ENCODE measurements at regions of chr17 and their contacts with region 1.

Region 1: DNA sequence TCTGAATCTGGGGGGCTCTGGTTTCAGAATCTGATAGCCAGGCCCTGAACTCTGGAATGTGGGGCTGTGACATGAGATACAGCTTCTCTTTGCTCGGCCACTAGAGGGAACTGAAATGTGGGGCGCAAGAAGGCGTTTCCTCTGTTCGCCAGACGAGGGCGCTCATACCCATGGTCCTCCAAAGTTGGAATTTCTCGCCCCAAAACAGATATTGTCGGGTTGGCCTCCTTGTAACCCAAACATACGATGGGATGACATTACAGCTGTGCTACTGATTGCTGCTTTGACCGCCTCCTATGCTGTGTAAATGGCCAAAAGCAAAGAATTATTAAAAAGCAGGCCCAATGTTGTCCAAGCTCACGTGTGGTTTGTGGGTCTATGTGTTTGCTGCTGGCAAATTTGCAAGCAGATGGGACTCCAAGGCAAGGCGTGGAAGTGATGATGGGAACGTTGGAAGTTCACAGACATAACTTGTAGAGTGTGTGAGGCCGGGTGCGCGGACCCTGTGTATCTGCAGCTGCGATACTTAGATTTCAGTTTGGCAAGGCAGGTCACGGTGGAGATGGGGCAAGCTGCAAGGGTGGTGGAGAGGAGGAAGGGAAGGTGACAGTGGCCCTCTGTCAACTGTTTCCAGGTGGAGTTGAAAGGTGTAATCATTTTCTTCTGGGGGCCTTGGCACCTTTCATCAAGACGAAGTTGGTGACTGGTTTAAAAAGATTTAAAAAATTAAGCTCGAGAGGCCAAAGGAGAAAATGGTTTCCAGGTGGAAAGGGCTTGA is 13.0 kb upstream of the MSI2 start:
- DNase-seq: peak; percentile 63 to 89 (median 70)
- ATAC-seq: peak; percentile 98
- H3K4me3 ChIP-seq: no peak overlapping the region
- H3K4me3 Mint-ChIP-seq: no peak overlapping the region
- H3K27ac ChIP-seq: no peak overlapping the region
- H3K27ac Mint-ChIP-seq: no peak overlapping the region
- H3K4me1 ChIP-seq: peaks cover 4% of the 10 kb centered on the region
- H3K4me1 Mint-ChIP-seq: no peaks in the 10 kb centered on the region
- H3K27me3 ChIP-seq: no peaks in the 10 kb centered on the region
- H3K27me3 Mint-ChIP-seq: peaks cover 4% of the 10 kb centered on the region
- CTCF ChIP-seq: peak; percentile 99

Region 2: DNA sequence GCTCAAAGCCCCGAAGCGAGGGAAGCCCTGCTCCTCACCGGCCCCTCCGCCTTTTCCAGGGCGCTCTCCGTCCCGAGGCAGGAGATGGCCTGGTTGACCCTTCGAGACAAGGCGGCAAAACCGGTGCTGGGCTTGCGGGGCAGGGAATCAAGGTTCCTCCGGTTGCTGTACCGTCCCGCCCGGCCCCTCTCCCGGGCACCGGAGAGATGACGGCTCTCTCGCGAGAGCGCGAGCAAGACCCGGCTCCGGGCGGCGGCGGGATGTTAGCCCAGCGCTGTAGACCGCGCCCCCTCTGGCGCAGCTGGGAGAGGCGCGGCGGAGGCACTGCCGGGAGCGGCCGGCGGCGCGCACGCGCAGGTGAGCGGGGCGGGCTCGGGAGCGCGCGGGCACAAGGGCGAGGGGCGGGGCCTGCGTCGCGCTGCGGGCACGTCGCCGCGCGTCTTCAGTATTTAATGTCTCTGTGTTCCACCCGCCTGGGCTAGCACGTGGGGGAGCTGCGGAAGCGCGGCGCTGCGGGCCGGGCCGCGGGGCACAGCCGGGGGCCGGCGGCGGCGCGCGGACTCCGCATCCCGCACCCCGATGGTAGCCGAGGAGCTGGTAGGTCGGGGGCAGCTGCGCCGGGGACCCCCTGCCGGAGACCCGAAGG is 158.4 kb before region 1 on chr17 and contains the start of gene AKAP1:
- CTCF ChIA-PET with region 1: no interaction called
- POLR2A ChIA-PET with region 1: no interaction called
- intact Hi-C with region 1: no loop called
- DNase-seq: peak; percentile 87 to 99 (median 94)
- ATAC-seq: peak; percentile 88
- H3K4me3 ChIP-seq: peak within 1 kb of the TSS; percentile 89
- H3K4me3 Mint-ChIP-seq: peak within 1 kb of the TSS; percentile 95
- H3K27ac ChIP-seq: peak within 1 kb of the TSS; percentile 84 to 85
- H3K27ac Mint-ChIP-seq: peak within 1 kb of the TSS; percentile 89
- H3K4me1 ChIP-seq: peaks cover 20% of the 10 kb centered on the region
- H3K4me1 Mint-ChIP-seq: peaks cover 36% of the 10 kb centered on the region
- H3K27me3 ChIP-seq: no peaks in the 10 kb centered on the region
- H3K27me3 Mint-ChIP-seq: no peaks in the 10 kb centered on the region
- CTCF ChIP-seq: no peak
- total RNA-seq, gene AKAP1: 20.3 to 23.1 TPM

Region 3: DNA sequence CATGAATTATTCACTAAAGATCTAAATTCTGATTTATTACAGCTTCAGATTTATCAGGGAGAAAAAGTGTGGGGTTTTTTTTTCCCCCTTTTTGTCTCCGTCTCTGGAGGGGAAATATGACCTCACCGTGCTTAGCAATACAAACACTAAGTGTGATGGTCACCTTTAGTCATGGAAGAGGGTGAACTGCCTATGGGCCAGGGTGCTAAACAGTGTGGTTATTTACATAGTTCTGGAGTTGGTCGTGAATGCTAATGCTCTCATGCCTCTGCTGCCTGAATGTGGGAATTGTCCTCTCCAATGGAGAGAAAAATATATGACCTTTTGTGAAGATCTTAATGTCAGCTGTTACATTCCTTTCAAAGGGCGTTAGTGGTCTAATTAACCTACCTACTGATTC is 31.8 kb before region 1 on chr17:
- CTCF ChIA-PET with region 1: no interaction called
- POLR2A ChIA-PET with region 1: no interaction called
- intact Hi-C with region 1: no loop called
- DNase-seq: no peak
- ATAC-seq: no peak
- H3K4me3 ChIP-seq: no peak overlapping the region
- H3K4me3 Mint-ChIP-seq: no peak overlapping the region
- H3K27ac ChIP-seq: no peak overlapping the region
- H3K27ac Mint-ChIP-seq: no peak overlapping the region
- H3K4me1 ChIP-seq: no peaks in the 10 kb centered on the region
- H3K4me1 Mint-ChIP-seq: no peaks in the 10 kb centered on the region
- H3K27me3 ChIP-seq: peaks cover 0 to 3% of the 10 kb centered on the region in 2 experiments
- H3K27me3 Mint-ChIP-seq: peaks cover 6% of the 10 kb centered on the region
- CTCF ChIP-seq: no peak

Region 4: GRCh38 chr17:57261084-57261461 is 17.7 kb after region 1 on chr17:
- CTCF ChIA-PET with region 1: interaction called, 79 read pairs
- POLR2A ChIA-PET with region 1: interaction called, 8 read pairs
- intact Hi-C with region 1: loop called in 1 of 2 experiments (anchors 1 kb)
- DNase-seq: no peak
- ATAC-seq: no peak
- H3K4me3 ChIP-seq: no peak overlapping the region
- H3K4me3 Mint-ChIP-seq: peak overlapping the region; percentile 70
- H3K27ac ChIP-seq: no peak overlapping the region
- H3K27ac Mint-ChIP-seq: peak overlapping the region; percentile 26
- H3K4me1 ChIP-seq: peaks cover 33% of the 10 kb centered on the region
- H3K4me1 Mint-ChIP-seq: peaks cover 80% of the 10 kb centered on the region
- H3K27me3 ChIP-seq: no peaks in the 10 kb centered on the region
- H3K27me3 Mint-ChIP-seq: no peaks in the 10 kb centered on the region
- CTCF ChIP-seq: no peak

Region 5: GRCh38 chr17:57284984-57285646 is 41.8 kb after region 1 on chr17:
- CTCF ChIA-PET with region 1: interaction called, 20 read pairs
- POLR2A ChIA-PET with region 1: no interaction called
- intact Hi-C with region 1: loop called (anchors 5 kb)
- DNase-seq: peak in 9 of 14 experiments; percentile 6 to 65 (median 22)
- ATAC-seq: peak; percentile 27
- H3K4me3 ChIP-seq: peak overlapping the region; percentile 17
- H3K4me3 Mint-ChIP-seq: peak overlapping the region; percentile 76
- H3K27ac ChIP-seq: peak overlapping the region in 1 of 2 donors; percentile 4
- H3K27ac Mint-ChIP-seq: peak overlapping the region; percentile 80
- H3K4me1 ChIP-seq: peaks cover 46% of the 10 kb centered on the region
- H3K4me1 Mint-ChIP-seq: peaks cover 80% of the 10 kb centered on the region
- H3K27me3 ChIP-seq: no peaks in the 10 kb centered on the region
- H3K27me3 Mint-ChIP-seq: no peaks in the 10 kb centered on the region
- CTCF ChIP-seq: no peak

Region 6: DNA sequence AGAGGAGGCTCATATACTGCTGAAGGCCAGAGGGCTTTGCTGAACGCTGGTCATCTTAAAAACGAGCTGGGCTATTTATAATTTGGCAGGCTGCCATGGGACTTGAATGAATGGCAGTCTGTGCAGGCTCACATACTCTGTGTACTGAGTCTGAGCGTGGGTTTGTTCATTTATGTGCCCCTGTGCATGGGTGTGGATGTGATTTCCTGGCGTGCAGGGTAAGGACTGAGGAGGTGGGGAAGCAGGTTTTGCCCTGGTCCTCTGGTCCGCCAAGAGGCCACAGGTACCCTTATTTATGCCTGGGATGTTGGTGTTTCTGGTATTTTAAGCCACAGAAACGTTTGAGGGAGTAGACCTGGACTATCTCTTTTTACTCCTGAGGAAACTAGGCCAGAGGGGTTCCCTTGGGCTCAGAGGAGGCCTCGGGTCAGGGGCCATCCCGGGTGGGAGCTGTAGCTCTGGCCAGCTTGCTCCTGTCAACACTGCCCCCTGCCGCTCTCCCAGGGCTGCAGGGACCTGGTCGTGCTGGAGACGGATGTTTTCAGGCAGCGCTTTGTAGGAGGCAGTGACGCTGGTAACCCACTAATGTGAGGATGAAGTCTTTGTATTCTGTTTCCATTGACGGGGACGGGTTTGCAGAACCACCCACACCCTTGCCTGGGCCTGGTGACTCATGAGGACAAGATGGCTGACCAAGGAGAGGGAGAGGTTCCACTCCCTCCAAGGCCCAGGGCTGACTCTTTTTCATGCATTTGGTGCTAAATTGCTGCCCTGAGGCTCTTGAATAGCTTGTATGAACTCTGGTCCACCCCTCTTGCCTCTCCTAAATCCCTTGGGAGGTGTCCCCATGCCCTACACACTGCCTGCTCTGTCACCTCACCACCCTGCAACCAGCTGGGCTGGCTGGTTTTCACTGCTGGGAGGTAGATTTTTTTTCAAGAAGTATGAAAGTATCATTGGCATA is 197.4 kb after region 1 on chr17:
- CTCF ChIA-PET with region 1: interaction called, 20 read pairs
- POLR2A ChIA-PET with region 1: interaction called, 5 read pairs
- intact Hi-C with region 1: loop called (anchors 5 kb)
- DNase-seq: peak; percentile 33 to 78 (median 64)
- ATAC-seq: peak; percentile 78
- H3K4me3 ChIP-seq: no peak overlapping the region
- H3K4me3 Mint-ChIP-seq: peak overlapping the region; percentile 30
- H3K27ac ChIP-seq: peak overlapping the region; percentile 9 to 18
- H3K27ac Mint-ChIP-seq: peak overlapping the region; percentile 87
- H3K4me1 ChIP-seq: peaks cover 56% of the 10 kb centered on the region
- H3K4me1 Mint-ChIP-seq: peaks cover 86% of the 10 kb centered on the region
- H3K27me3 ChIP-seq: no peaks in the 10 kb centered on the region
- H3K27me3 Mint-ChIP-seq: no peaks in the 10 kb centered on the region
- CTCF ChIP-seq: peak; percentile 44

Region 7: GRCh38 chr17:57597531-57598453 is 354.4 kb after region 1 on chr17:
- CTCF ChIA-PET with region 1: interaction called, 4 read pairs
- POLR2A ChIA-PET with region 1: no interaction called
- intact Hi-C with region 1: loop called in 1 of 2 experiments (anchors 5 kb)
- DNase-seq: peak in 8 of 14 experiments; percentile 10 to 62 (median 34)
- ATAC-seq: no peak
- H3K4me3 ChIP-seq: no peak overlapping the region
- H3K4me3 Mint-ChIP-seq: no peak overlapping the region
- H3K27ac ChIP-seq: no peak overlapping the region
- H3K27ac Mint-ChIP-seq: peak overlapping the region; percentile 87
- H3K4me1 ChIP-seq: peaks cover 55% of the 10 kb centered on the region
- H3K4me1 Mint-ChIP-seq: peaks cover 61% of the 10 kb centered on the region
- H3K27me3 ChIP-seq: no peaks in the 10 kb centered on the region
- H3K27me3 Mint-ChIP-seq: no peaks in the 10 kb centered on the region
- CTCF ChIP-seq: peak; percentile 80

Region 8: DNA sequence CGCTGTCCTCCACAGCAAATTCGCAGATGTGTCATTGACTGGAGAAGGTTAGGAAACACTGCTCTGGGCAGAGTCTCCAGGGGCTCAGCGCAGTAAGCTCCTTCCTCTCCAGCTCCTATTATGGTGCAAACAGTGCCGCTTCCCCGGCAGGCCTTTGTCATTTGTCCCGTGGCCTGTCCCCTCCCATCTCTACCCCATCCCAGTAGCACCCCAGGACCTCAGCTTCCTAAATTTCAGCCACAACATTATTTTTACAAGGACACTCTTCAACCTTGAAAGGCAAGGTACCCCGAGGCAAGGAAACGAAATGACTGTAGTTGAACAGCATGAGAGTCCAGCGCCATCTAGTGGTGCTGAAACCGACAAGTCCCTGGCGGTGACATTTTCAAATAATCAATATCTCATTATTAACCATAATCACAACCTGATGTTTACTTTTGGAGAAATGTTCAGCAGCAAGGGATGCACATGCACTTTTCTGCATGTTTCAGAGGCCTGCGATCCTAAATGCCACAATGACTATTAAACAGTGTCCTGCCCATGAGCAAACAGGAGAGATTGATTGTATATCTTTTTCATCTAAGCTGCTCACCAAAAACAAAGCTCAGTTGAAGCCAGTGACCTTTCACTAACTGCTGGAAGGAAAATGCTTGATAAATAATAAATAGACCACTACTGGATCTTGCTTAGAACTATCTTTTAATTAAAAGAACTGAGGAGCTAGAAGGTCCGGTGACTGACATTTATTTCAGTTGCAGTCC is 590.0 kb after region 1 on chr17:
- CTCF ChIA-PET with region 1: interaction called, 8 read pairs
- POLR2A ChIA-PET with region 1: interaction called, 3 read pairs
- intact Hi-C with region 1: loop called (anchors 1 to 5 kb)
- DNase-seq: peak; percentile 43 to 86 (median 58)
- ATAC-seq: peak; percentile 85
- H3K4me3 ChIP-seq: peak overlapping the region; percentile 46
- H3K4me3 Mint-ChIP-seq: no peak overlapping the region
- H3K27ac ChIP-seq: no peak overlapping the region
- H3K27ac Mint-ChIP-seq: no peak overlapping the region
- H3K4me1 ChIP-seq: peaks cover 6% of the 10 kb centered on the region
- H3K4me1 Mint-ChIP-seq: peaks cover 6% of the 10 kb centered on the region
- H3K27me3 ChIP-seq: no peaks in the 10 kb centered on the region
- H3K27me3 Mint-ChIP-seq: no peaks in the 10 kb centered on the region
- CTCF ChIP-seq: peak; percentile 96

Measured in CD4-positive, alpha-beta T cell (primary cell).